ENCODE measurements at regions of chr1 and their contacts with region 1.

Region 1: DNA sequence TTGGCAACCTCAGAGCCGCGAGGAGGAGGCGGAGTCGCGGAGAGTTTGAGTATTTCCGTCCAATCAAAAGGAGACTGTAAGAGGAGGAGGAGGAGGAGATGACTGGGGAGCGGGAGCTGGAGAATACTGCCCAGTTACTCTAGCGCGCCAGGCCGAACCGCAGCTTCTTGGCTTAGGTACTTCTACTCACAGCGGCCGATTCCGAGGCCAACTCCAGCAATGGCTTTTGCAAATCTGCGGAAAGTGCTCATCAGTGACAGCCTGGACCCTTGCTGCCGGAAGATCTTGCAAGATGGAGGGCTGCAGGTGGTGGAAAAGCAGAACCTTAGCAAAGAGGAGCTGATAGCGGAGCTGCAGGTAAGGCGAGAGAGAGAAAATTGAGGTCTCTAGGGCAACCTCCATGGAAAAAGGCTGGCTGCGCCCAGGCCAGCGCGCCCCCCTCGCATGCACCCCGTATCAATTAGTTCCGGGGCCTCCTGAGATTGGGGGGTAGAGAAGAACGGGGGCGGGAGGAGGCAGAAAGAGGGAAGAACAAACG is at the start of gene PHGDH:
- DNase-seq: peak; percentile 35 to 78 (median 56)
- ATAC-seq: peak; percentile 85
- H3K4me3 ChIP-seq: peak within 1 kb of the TSS; percentile 68
- H3K27ac ChIP-seq: peak within 1 kb of the TSS; percentile 60; the same call in 2 of the 3 replicates
- H3K4me1 ChIP-seq: peaks cover 17 to 30% of the 10 kb centered on the region in 2 experiments
- H3K27me3 ChIP-seq: peaks cover 2 to 12% of the 10 kb centered on the region in 2 experiments; a peak in 4 of 5 replicates
- CTCF ChIP-seq: no peak
- EP300 ChIP-seq: no peak; the same call in 1 of the 2 replicates
- POLR2A ChIP-seq: peak; percentile 67
- RAD21 ChIP-seq: no peak
- polyA plus RNA-seq, gene PHGDH: 8.6 to 14.7 TPM

Region 2: GRCh38 chr1:119675349-119676345 is 36.2 kb before region 1 on chr1:
- CTCF ChIA-PET with region 1: no interaction called
- POLR2A ChIA-PET with region 1: interaction called, 3 read pairs
- in situ Hi-C with region 1: no loop called
- intact Hi-C with region 1: loop called (anchors 5 kb)
- DNase-seq: peak; percentile 85 to 91 (median 86)
- ATAC-seq: peak; percentile 92
- H3K4me3 ChIP-seq: peak overlapping the region; percentile 28
- H3K27ac ChIP-seq: no peak overlapping the region
- H3K4me1 ChIP-seq: peaks cover 0 to 18% of the 10 kb centered on the region in 2 experiments; a peak in 3 of 5 replicates
- H3K27me3 ChIP-seq: no peaks in the 10 kb centered on the region
- CTCF ChIP-seq: peak; percentile 80 to 96 (median 90)
- EP300 ChIP-seq: no peak
- POLR2A ChIP-seq: no peak
- RAD21 ChIP-seq: peak; percentile 75 to 88

Region 3: DNA sequence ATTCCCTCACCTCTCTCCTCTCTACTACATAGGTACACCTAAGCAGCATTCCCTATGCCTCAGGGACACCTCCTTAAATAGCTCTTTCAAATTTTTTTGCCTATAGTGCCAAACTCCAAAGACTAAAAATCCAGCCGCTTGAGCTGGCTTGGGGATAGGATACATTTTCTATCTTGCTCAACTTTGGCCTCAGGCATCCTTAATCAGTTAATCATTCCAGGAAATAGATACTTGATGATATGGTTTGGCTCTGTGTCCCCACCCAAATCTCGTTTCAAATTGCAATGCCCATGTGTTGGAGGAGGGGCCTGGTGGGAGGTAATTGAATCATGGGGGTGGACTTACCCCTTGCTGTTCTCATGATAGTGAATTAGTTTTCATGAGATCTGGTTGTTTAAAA is 11.5 kb before region 1 on chr1:
- CTCF ChIA-PET with region 1: no interaction called
- POLR2A ChIA-PET with region 1: interaction called, 11 read pairs
- in situ Hi-C with region 1: no loop called
- intact Hi-C with region 1: no loop called
- DNase-seq: no peak
- ATAC-seq: no peak
- H3K4me3 ChIP-seq: no peak overlapping the region
- H3K27ac ChIP-seq: no peak overlapping the region
- H3K4me1 ChIP-seq: no peaks in the 10 kb centered on the region
- H3K27me3 ChIP-seq: peaks cover 2 to 10% of the 10 kb centered on the region in 2 experiments; a peak in 3 of 5 replicates
- CTCF ChIP-seq: no peak
- EP300 ChIP-seq: no peak
- POLR2A ChIP-seq: no peak
- RAD21 ChIP-seq: no peak

Region 4: DNA sequence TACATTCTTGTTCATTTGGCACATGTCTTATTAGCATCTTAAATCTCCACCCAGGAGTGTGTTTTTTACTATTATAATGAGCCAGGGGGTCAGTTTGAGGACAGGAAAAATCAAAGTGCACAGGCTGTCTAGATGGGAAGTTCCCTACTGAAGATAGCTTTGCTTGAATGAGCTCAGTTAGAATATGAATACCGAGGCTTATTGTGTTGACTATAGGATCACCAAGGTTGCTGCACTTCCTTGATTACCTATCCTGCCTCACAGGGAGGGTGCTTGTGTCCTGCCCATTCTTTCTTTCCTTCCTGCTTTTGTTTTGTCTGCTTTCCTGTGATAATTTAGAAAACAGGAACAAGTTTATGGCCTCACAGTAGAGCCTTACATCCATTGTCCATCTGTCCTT is 16.1 kb after region 1 on chr1:
- CTCF ChIA-PET with region 1: no interaction called
- POLR2A ChIA-PET with region 1: interaction called, 10 read pairs
- in situ Hi-C with region 1: no loop called
- intact Hi-C with region 1: no loop called
- DNase-seq: no peak
- ATAC-seq: no peak
- H3K4me3 ChIP-seq: no peak overlapping the region
- H3K27ac ChIP-seq: no peak overlapping the region
- H3K4me1 ChIP-seq: 0 out of 5 replicates have a peak, but pooled peaks cover 0 to 2% of the 10 kb centered on the region in 2 experiments
- H3K27me3 ChIP-seq: no peaks in the 10 kb centered on the region
- CTCF ChIP-seq: no peak
- EP300 ChIP-seq: no peak
- POLR2A ChIP-seq: no peak
- RAD21 ChIP-seq: no peak

Region 5: DNA sequence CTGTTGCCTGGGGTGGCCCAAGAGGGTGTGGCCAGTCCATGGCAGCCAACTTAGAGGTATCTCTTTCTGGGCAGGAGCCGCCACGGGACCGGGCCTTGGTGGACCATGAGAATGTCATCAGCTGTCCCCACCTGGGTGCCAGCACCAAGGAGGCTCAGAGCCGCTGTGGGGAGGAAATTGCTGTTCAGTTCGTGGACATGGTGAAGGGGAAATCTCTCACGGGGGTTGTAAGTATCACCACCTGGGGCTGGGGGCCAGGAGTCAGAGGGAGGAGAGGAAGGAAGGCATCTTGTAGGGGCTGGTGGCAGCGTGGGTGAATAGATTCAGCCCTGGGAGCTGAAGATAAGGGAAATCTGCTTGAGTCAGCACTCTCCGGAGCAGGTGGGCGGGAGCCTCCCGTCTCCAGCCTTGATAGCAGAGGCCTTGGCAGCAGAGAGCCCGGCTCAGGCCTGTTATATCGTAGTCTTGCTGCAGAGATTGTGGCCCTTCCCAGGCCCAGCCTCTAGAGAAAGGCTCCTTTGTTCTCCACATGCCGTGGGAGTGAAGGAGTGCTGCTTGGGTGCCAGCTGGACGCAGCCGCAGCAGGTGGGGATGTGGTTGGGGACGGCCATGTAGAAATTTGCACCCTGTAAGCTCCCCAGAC is 25.3 kb after region 1 on chr1:
- CTCF ChIA-PET with region 1: no interaction called
- POLR2A ChIA-PET with region 1: interaction called, 7 read pairs
- in situ Hi-C with region 1: no loop called
- intact Hi-C with region 1: loop called (anchors 2 kb)
- DNase-seq: peak; percentile 84 to 93 (median 88)
- ATAC-seq: peak; percentile 91
- H3K4me3 ChIP-seq: no peak overlapping the region
- H3K27ac ChIP-seq: no peak overlapping the region
- H3K4me1 ChIP-seq: peaks cover 11 to 14% of the 10 kb centered on the region in 2 experiments
- H3K27me3 ChIP-seq: no peaks in the 10 kb centered on the region; a peak in 1 of 5 replicates
- CTCF ChIP-seq: peak in 1 of 3 experiments; percentile 8; a peak in 1 of 6 replicates
- EP300 ChIP-seq: peak; percentile 89
- POLR2A ChIP-seq: no peak
- RAD21 ChIP-seq: no peak

Measured in K562 (cell line).